Aorta (tissue), 5 donors: ENCODE measurements at regions of chr7 and their contacts with region 1.

Region 1: GRCh38 chr7:92588561-92588960 is 1.6 kb downstream of the FAM133B start:
- DNase-seq: no peak
- ATAC-seq: no peak
- H3K4me3 ChIP-seq: no peak overlapping the region
- H3K27ac ChIP-seq: no peak overlapping the region
- H3K4me1 ChIP-seq: peaks cover 0 to 8% of the 10 kb centered on the region in 2 donors
- H3K27me3 ChIP-seq: no peaks in the 10 kb centered on the region

Region 2: DNA sequence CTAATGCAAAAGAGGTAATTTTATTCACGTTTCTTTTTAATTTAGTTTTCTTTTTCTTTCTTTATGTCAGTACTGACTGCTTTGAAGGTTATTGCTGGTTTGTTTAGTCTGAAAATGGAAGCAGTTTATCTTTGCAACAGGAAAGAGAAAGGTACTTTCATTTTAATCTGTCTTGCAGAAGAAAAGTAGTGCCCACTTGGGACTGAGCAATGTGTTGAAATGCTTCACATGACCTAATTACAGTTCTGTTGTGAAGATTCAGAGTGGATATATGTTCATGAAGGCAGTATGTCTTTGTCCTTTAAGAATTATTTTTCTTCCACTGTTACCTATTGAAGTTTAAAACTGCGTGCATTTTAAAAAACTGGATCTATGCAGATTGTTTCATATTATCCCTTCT is 262.7 kb before region 1 on chr7:
- intact Hi-C with region 1: no loop called
- DNase-seq: no peak
- ATAC-seq: no peak
- H3K4me3 ChIP-seq: no peak overlapping the region
- H3K27ac ChIP-seq: no peak overlapping the region
- H3K4me1 ChIP-seq: no peaks in the 10 kb centered on the region
- H3K27me3 ChIP-seq: no peaks in the 10 kb centered on the region

Region 3: GRCh38 chr7:92528188-92528957 is 60.2 kb before region 1 on chr7 and contains the starts of genes PEX1 and RBM48:
- intact Hi-C with region 1: loop called in 1 of 2 experiments (anchors 2 kb)
- DNase-seq: peak; percentile 98
- ATAC-seq: peak; percentile 99
- H3K4me3 ChIP-seq: peak within 1 kb of the TSS; percentile 84 to 97
- H3K27ac ChIP-seq: peak within 1 kb of the TSS; percentile 1 to 66
- H3K4me1 ChIP-seq: peaks cover 0 to 2% of the 10 kb centered on the region in 2 donors
- H3K27me3 ChIP-seq: no peaks in the 10 kb centered on the region
- total RNA-seq, gene PEX1: 17.1 to 18.5 TPM
- total RNA-seq, gene RBM48: 9.8 to 12.9 TPM

Region 4: DNA sequence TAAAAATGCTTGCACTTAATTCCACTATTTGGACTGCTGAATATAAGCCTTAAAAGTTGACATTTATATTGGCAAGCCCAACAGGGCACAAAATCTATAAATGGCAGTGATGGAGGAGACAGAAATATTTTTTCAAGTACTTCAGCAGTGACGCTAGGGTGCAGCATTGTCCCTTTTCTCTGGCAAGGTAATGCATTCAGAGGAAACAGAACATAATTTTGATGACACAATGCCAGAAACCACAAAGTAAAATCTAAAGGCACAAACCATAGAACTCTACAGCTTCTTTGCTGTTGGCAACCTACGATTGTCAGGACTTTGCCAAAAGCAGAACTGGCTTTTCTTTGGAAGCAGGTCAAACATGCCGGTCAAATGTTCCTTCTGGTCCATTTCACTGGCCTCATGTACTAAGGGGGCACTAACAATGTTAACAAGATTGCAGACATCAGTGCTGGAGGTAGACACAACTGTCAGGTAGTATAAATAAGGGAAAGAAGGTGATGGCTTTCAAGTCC is 32.5 kb after region 1 on chr7:
- intact Hi-C with region 1: no loop called
- DNase-seq: peak; percentile 79 to 82
- ATAC-seq: peak; percentile 91
- H3K4me3 ChIP-seq: no peak overlapping the region
- H3K27ac ChIP-seq: peak overlapping the region; percentile 81 to 93
- H3K4me1 ChIP-seq: peaks cover 0 to 3% of the 10 kb centered on the region in 2 donors
- H3K27me3 ChIP-seq: no peaks in the 10 kb centered on the region

Region 5: DNA sequence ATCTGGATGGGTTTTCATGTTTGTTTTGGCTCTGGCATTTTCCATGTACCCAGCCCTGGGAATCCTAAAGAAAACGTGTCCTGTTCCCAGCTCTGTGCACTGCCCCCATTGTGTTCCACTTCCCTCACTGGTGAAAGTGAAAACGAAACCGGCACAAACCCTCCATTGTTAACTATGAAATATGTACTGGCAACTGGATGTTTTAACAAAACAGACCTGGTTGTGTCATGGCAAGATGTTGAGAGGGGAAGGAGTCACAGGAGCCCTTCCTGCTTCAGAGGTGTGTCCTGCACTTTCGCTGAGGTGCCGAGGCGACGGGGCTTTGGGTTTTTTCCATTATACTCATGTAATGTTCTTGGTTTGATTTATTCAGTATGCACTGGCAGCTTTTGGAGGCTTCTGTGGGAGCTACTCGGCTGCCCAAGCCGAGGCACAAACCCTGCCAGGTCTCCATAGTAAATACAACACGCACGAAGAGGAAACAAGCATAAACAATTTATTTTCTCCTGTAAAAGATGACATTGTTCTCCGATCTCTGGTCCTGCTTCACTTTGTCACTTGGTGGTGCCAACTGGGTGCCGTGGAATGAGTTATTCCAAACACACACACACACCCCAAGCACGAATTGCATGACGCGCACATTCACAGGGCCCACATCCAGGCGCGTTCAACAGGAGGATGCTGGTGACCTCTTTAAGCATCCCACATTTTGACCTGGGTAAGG is 129.6 kb after region 1 on chr7:
- intact Hi-C with region 1: no loop called
- DNase-seq: peak; percentile 57 to 79
- ATAC-seq: peak; percentile 92
- H3K4me3 ChIP-seq: peak overlapping the region; percentile 56 to 96
- H3K27ac ChIP-seq: peak overlapping the region; percentile 81 to 99
- H3K4me1 ChIP-seq: peaks cover 0 to 4% of the 10 kb centered on the region in 2 donors
- H3K27me3 ChIP-seq: no peaks in the 10 kb centered on the region